Naive thymus-derived CD4-positive, alpha-beta T cell (primary cell): ENCODE measurements at regions of chr19 and their contacts with region 1.

Region 1: GRCh38 chr19:49570138-49570856 is 10.1 kb downstream of the NOSIP start:
- DNase-seq: peak in 7 of 9 donors; percentile 75 to 88 (median 83)
- ATAC-seq: peak; percentile 64
- H3K4me3 ChIP-seq: no peak overlapping the region
- H3K4me3 Mint-ChIP-seq: peak overlapping the region; percentile 64 to 80 (median 75)
- H3K27ac ChIP-seq: peak overlapping the region; percentile 56
- H3K27ac Mint-ChIP-seq: peak overlapping the region; percentile 86 to 99 (median 93)
- H3K4me1 ChIP-seq: peaks cover 37 to 53% of the 10 kb centered on the region in 2 donors
- H3K4me1 Mint-ChIP-seq: peaks cover 34 to 70% (median 61%) of the 10 kb centered on the region in 7 donors
- H3K27me3 ChIP-seq: no peaks in the 10 kb centered on the region
- H3K27me3 Mint-ChIP-seq: peaks cover 0 to 2% (median 0%) of the 10 kb centered on the region in 5 donors

Region 2: GRCh38 chr19:49056010-49056901 is 514.0 kb before region 1 on chr19:
- CTCF ChIA-PET with region 1: no interaction called
- POLR2A ChIA-PET with region 1: no interaction called
- intact Hi-C with region 1: no loop called
- DNase-seq: peak; percentile 33 to 75 (median 45)
- ATAC-seq: peak; percentile 86
- H3K4me3 ChIP-seq: peak overlapping the region; percentile 62
- H3K4me3 Mint-ChIP-seq: peak overlapping the region; percentile 67 to 99 (median 87)
- H3K27ac ChIP-seq: peak overlapping the region; percentile 45
- H3K27ac Mint-ChIP-seq: peak overlapping the region in 2 of 9 donors; percentile 32 to 36
- H3K4me1 ChIP-seq: peaks cover 11 to 14% of the 10 kb centered on the region in 2 donors
- H3K4me1 Mint-ChIP-seq: peaks cover 16 to 19% (median 17%) of the 10 kb centered on the region in 7 donors
- H3K27me3 ChIP-seq: peaks cover 0 to 10% of the 10 kb centered on the region in 2 donors
- H3K27me3 Mint-ChIP-seq: peaks cover 16 to 59% (median 30%) of the 10 kb centered on the region in 5 donors

Region 3: DNA sequence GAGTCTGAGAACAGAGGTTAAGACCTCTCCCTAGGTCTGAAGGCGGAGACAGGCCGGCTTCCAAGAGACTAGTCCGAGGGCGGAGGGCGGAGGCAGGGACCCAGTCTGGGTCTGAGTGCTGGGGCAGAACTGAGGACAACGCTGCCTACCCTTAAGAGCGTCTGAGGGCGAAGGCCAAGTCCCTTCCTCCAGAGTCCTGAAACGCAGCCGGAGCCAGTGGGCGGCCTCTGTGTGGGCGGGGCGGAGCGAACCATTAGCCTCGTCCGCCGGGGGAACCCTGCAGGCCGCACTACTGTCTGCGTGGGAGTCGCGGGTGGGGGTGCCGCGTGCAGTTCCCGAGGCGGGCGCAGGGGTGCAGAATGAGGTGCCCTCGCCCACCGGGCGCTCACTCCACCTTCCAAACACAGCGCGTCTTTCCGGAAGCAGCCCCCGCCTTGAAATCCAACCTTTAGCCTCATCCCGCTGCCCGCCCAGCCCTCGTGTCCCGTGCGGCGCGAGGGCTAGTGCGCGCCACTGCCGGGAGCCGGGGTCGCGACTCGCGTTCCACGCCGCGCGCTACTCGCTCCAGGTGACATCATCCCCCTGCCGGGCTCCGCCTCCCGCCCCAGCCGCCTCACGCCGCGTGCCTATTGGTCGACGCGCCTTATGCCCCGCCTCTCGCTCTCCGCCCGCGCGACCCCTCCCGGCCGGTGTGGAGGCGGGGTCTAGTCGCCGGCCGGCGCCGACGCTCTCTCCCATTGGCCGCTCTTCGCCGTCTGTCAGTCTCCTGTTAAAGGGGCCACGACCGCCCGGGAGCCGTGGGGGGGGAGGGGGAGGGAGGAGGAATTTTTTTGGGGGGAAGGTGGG is 451.5 kb before region 1 on chr19 and contains the start of gene C19orf73:
- CTCF ChIA-PET with region 1: interaction called, 3 read pairs
- POLR2A ChIA-PET with region 1: no interaction called
- intact Hi-C with region 1: loop called in 1 of 2 experiments (anchors 10 kb)
- DNase-seq: peak; percentile 93 to 98 (median 97)
- ATAC-seq: peak; percentile 91
- H3K4me3 ChIP-seq: peak within 1 kb of the TSS; percentile 83
- H3K4me3 Mint-ChIP-seq: peak within 1 kb of the TSS; percentile 83 to 91 (median 88)
- H3K27ac ChIP-seq: peak within 1 kb of the TSS; percentile 92
- H3K27ac Mint-ChIP-seq: peak within 1 kb of the TSS; percentile 89 to 95 (median 93)
- H3K4me1 ChIP-seq: peaks cover 13 to 16% of the 10 kb centered on the region in 2 donors
- H3K4me1 Mint-ChIP-seq: peaks cover 25 to 43% (median 39%) of the 10 kb centered on the region in 7 donors
- H3K27me3 ChIP-seq: no peaks in the 10 kb centered on the region
- H3K27me3 Mint-ChIP-seq: peaks cover 0 to 27% (median 0%) of the 10 kb centered on the region in 5 donors
- total RNA-seq, gene C19orf73: 1.3 to 2.8 (median 2.2) TPM

Region 4: GRCh38 chr19:49391581-49392399 is 178.5 kb before region 1 on chr19:
- CTCF ChIA-PET with region 1: interaction called, 4 read pairs
- POLR2A ChIA-PET with region 1: no interaction called
- intact Hi-C with region 1: loop called in 1 of 2 experiments (anchors 1 kb)
- DNase-seq: peak; percentile 61 to 82 (median 74)
- ATAC-seq: peak; percentile 89
- H3K4me3 ChIP-seq: no peak overlapping the region
- H3K4me3 Mint-ChIP-seq: peak overlapping the region in 2 of 10 donors; percentile 3 to 51
- H3K27ac ChIP-seq: no peak overlapping the region
- H3K27ac Mint-ChIP-seq: peak overlapping the region in 6 of 9 donors; percentile 1 to 84 (median 54)
- H3K4me1 ChIP-seq: peaks cover 7 to 13% of the 10 kb centered on the region in 2 donors
- H3K4me1 Mint-ChIP-seq: peaks cover 6 to 26% (median 10%) of the 10 kb centered on the region in 7 donors
- H3K27me3 ChIP-seq: no peaks in the 10 kb centered on the region
- H3K27me3 Mint-ChIP-seq: peaks cover 0 to 11% (median 3%) of the 10 kb centered on the region in 5 donors

Region 5: DNA sequence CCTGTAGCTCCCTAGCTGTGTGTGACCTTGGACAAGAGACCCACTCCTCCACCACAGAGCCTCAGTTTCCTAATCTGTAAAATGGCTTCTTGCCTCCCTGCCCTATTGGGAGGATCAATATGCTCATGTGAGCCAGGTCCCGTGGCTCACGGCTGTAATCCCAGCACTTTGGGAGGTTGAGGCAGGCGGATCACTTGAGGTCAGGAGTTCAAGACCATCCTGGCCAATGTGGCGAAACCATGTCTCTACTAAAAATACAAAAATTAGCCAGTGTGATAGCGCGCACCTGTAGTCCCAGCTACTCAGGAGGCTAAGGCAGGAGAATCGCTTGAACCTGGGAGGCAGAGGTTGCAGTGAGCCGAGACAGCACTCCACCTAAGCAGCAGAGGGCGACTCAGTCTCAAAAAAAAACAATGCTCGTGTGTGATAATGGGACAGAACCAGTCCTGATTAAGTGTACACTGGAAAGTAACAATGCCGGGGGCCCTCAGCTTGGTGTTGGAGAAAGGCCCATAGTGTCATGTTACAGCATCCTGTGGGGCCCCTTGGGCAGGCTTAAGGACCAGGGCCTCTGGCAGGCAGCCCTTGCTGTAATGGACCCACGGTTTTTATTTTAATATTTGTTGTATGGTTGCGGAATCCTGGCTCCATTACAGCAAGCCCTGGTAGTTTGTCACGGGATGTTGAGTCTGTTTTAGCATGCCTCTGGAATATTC is 67.3 kb before region 1 on chr19:
- CTCF ChIA-PET with region 1: interaction called, 314 read pairs
- POLR2A ChIA-PET with region 1: interaction called, 118 read pairs
- intact Hi-C with region 1: loop called (anchors 1 kb)
- DNase-seq: peak in 5 of 9 donors; percentile 68 to 81 (median 77)
- ATAC-seq: no peak
- H3K4me3 ChIP-seq: no peak overlapping the region
- H3K4me3 Mint-ChIP-seq: peak overlapping the region in 6 of 10 donors; percentile 7 to 96 (median 48)
- H3K27ac ChIP-seq: peak overlapping the region; percentile 99
- H3K27ac Mint-ChIP-seq: peak overlapping the region; percentile 91 to 100 (median 98)
- H3K4me1 ChIP-seq: peaks cover 36% of the 10 kb centered on the region in 2 donors
- H3K4me1 Mint-ChIP-seq: peaks cover 24 to 55% (median 40%) of the 10 kb centered on the region in 7 donors
- H3K27me3 ChIP-seq: no peaks in the 10 kb centered on the region
- H3K27me3 Mint-ChIP-seq: peaks cover 0 to 9% (median 0%) of the 10 kb centered on the region in 5 donors

Region 6: GRCh38 chr19:49528211-49528771 is 42.0 kb before region 1 on chr19:
- CTCF ChIA-PET with region 1: interaction called, 6 read pairs
- POLR2A ChIA-PET with region 1: interaction called, 17 read pairs
- intact Hi-C with region 1: loop called in 1 of 2 experiments (anchors 1 kb)
- DNase-seq: no peak
- ATAC-seq: no peak
- H3K4me3 ChIP-seq: peak overlapping the region; percentile 64
- H3K4me3 Mint-ChIP-seq: peak overlapping the region; percentile 80 to 90 (median 86)
- H3K27ac ChIP-seq: peak overlapping the region; percentile 45
- H3K27ac Mint-ChIP-seq: peak overlapping the region in 6 of 9 donors; percentile 59 to 87 (median 76)
- H3K4me1 ChIP-seq: peaks cover 9 to 15% of the 10 kb centered on the region in 2 donors
- H3K4me1 Mint-ChIP-seq: peaks cover 19 to 42% (median 30%) of the 10 kb centered on the region in 7 donors
- H3K27me3 ChIP-seq: no peaks in the 10 kb centered on the region
- H3K27me3 Mint-ChIP-seq: peaks cover 0 to 9% (median 0%) of the 10 kb centered on the region in 5 donors

Region 7: GRCh38 chr19:49546825-49547565 is 23.3 kb before region 1 on chr19:
- CTCF ChIA-PET with region 1: interaction called, 231 read pairs
- POLR2A ChIA-PET with region 1: interaction called, 687 read pairs
- intact Hi-C with region 1: loop called (anchors 1 kb)
- DNase-seq: peak in 8 of 9 donors; percentile 62 to 82 (median 78)
- ATAC-seq: peak; percentile 92
- H3K4me3 ChIP-seq: peak overlapping the region; percentile 30
- H3K4me3 Mint-ChIP-seq: peak overlapping the region; percentile 78 to 94 (median 84)
- H3K27ac ChIP-seq: peak overlapping the region; percentile 46
- H3K27ac Mint-ChIP-seq: peak overlapping the region; percentile 76 to 99 (median 91)
- H3K4me1 ChIP-seq: peaks cover 17 to 60% of the 10 kb centered on the region in 2 donors
- H3K4me1 Mint-ChIP-seq: peaks cover 29 to 81% (median 48%) of the 10 kb centered on the region in 7 donors
- H3K27me3 ChIP-seq: no peaks in the 10 kb centered on the region
- H3K27me3 Mint-ChIP-seq: peaks cover 0 to 3% (median 0%) of the 10 kb centered on the region in 5 donors

Region 8: DNA sequence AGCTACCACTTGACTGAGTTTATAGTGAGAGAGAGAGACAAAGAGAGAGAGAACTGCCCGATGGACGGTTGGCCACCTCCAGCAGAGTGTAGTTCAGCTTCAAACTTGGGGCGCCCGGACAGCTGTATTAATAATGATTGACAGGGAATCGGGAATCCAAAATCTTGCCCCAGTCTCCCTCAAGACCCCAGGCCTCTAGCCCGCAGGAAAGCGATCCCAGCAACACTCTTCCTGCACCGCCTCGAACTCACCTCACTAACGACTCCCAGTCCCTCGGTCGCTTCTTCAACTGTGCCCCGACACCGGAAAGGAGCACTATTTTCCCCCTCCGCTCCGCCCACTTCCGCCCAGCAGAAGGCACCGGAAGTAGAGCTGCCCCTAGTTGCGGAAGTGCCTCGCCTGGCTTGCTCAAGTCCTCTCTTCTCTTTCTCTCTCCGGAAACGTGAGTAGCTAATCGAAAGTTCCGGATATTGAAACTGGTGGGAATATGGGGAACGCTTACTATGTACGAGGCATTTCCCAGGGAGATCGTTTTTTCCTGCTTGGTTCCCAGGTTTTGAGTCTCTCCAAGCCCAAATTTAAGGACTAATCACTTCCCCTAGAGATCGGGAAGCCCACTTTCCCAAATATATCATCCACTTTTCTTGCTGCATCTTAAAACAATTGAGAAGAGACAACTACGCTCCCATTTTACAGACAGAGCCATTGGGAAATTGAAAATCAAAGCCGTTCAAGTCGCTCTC is 10.1 kb after region 1 on chr19 and contains the start of gene NOSIP:
- CTCF ChIA-PET with region 1: interaction called, 16 read pairs
- POLR2A ChIA-PET with region 1: interaction called, 27 read pairs
- intact Hi-C with region 1: no loop called
- DNase-seq: peak; percentile 88 to 96 (median 94)
- ATAC-seq: peak; percentile 100
- H3K4me3 ChIP-seq: peak within 1 kb of the TSS; percentile 68
- H3K4me3 Mint-ChIP-seq: peak within 1 kb of the TSS; percentile 91 to 98 (median 94)
- H3K27ac ChIP-seq: peak within 1 kb of the TSS; percentile 84
- H3K27ac Mint-ChIP-seq: peak within 1 kb of the TSS; percentile 85 to 98 (median 92)
- H3K4me1 ChIP-seq: peaks cover 0 to 22% of the 10 kb centered on the region in 2 donors
- H3K4me1 Mint-ChIP-seq: peaks cover 20 to 49% (median 36%) of the 10 kb centered on the region in 7 donors
- H3K27me3 ChIP-seq: no peaks in the 10 kb centered on the region
- H3K27me3 Mint-ChIP-seq: no peaks in the 10 kb centered on the region
- total RNA-seq, gene NOSIP: 222 to 267 (median 228) TPM